Dendritic cell treated with granulocyte-macrophage colony-stimulating factor and Interleukin-4, amounts not matched to agents 40 ng/mL and 50 ng/mL, for 4 days (primary cell): ENCODE measurements at regions of chr16 and their contacts with region 1.

Region 1: DNA sequence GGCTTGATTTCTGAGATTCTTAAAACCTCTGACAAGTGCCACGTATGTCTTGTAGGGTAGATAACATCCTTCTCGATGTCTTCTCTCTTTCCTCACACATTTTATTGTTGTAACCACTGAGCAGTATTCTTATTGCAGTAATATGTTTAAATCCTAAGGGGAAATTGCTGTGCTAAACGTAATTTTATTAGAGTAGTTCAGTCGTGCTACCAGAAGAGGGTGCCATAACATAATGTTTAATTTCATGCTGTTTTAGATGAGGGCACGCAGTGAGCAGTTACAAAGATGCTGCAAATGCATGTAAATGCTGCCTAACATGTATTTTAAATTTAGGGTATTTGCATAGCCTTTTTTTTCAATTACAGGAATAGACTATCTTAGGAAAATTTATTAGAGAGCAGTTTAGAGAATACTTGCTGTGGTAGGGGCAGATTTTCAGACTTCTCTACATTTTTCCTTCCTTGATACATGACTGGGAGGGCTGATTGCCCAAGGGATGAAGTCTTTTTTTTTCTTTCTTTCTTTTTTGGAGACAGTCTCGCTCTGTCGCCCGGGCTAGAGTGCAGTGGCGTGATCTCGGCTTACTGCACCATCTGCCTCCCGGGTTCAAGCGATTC is 51.7 kb downstream of the GAN start:
- H3K4me3 Mint-ChIP-seq: no peak overlapping the region
- H3K27ac Mint-ChIP-seq: no peak overlapping the region
- H3K4me1 Mint-ChIP-seq: no peaks in the 10 kb centered on the region
- H3K27me3 Mint-ChIP-seq: no peaks in the 10 kb centered on the region

Region 2: GRCh38 chr16:81403616-81404373 is 37.4 kb after region 1 on chr16:
- intact Hi-C with region 1: no loop called
- H3K4me3 Mint-ChIP-seq: peak overlapping the region; percentile 32
- H3K27ac Mint-ChIP-seq: no peak overlapping the region
- H3K4me1 Mint-ChIP-seq: peaks cover 7% of the 10 kb centered on the region
- H3K27me3 Mint-ChIP-seq: peaks cover 25% of the 10 kb centered on the region

Region 3: GRCh38 chr16:81723098-81723723 is 356.8 kb after region 1 on chr16:
- intact Hi-C with region 1: loop called (anchors 1 kb)
- H3K4me3 Mint-ChIP-seq: no peak overlapping the region
- H3K27ac Mint-ChIP-seq: no peak overlapping the region
- H3K4me1 Mint-ChIP-seq: peaks cover 20% of the 10 kb centered on the region
- H3K27me3 Mint-ChIP-seq: peaks cover 4% of the 10 kb centered on the region

Region 4: GRCh38 chr16:81885976-81886586 is 519.7 kb after region 1 on chr16:
- intact Hi-C with region 1: loop called (anchors 5 kb)
- H3K4me3 Mint-ChIP-seq: no peak overlapping the region
- H3K27ac Mint-ChIP-seq: no peak overlapping the region
- H3K4me1 Mint-ChIP-seq: peaks cover 9% of the 10 kb centered on the region
- H3K27me3 Mint-ChIP-seq: no peaks in the 10 kb centered on the region